Naive thymus-derived CD4-positive, alpha-beta T cell (primary cell): ENCODE measurements at regions of chr6 and their contacts with region 1.

Region 1: DNA sequence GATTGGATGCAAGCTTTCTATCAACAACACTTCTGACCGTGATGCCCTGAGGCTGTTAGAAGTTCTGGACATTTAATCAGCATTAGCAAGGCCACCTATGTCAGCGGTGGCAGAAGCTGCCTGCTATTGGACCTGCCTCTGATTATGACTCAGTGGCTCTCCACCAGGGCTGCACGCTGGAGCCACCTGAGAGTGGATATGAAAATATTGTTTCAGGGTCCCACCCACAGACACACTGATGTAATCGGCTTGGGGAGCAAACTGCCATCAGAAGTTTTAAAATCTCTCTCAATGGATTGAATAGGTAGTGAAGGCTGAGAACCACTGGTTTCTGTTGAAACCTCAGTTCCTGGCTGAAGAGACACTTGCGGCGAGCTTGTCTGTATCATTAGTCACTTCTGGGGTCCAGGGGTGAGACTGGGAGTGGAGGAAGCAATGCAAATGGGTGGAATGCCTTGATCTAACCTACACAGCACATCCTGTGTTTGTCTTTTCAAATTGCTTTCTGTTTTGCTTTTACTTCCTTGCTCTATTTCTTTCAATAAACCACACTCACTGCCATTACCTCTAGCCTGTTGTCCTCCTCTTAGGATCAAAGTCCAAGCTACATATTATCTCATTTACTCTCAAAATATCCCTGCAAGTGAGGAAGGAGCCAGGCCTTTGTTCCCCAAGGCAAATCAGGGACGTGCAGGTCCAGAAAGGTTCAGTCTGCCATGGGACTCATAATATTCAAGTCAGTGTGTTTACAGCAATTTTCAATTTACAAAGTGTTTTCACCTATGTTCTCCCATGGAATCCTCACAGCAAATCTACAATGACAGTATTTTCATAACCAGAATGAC is 4.2 kb downstream of the CLIC5 start:
- DNase-seq: peak in 8 of 9 donors; percentile 35 to 69 (median 58)
- ATAC-seq: peak; percentile 88
- H3K4me3 ChIP-seq: peak overlapping the region; percentile 45
- H3K4me3 Mint-ChIP-seq: peak overlapping the region; percentile 68 to 82 (median 78)
- H3K27ac ChIP-seq: peak overlapping the region; percentile 64
- H3K27ac Mint-ChIP-seq: peak overlapping the region; percentile 85 to 98 (median 92)
- H3K4me1 ChIP-seq: peaks cover 37 to 43% of the 10 kb centered on the region in 2 donors
- H3K4me1 Mint-ChIP-seq: peaks cover 37 to 62% (median 60%) of the 10 kb centered on the region in 7 donors
- H3K27me3 ChIP-seq: no peaks in the 10 kb centered on the region
- H3K27me3 Mint-ChIP-seq: peaks cover 0 to 14% (median 1%) of the 10 kb centered on the region in 5 donors

Region 2: GRCh38 chr6:44820321-44820720 is 1191.1 kb before region 1 on chr6:
- CTCF ChIA-PET with region 1: no interaction called
- POLR2A ChIA-PET with region 1: no interaction called
- intact Hi-C with region 1: no loop called
- DNase-seq: no peak
- ATAC-seq: peak; percentile 76
- H3K4me3 ChIP-seq: no peak overlapping the region
- H3K4me3 Mint-ChIP-seq: no peak overlapping the region
- H3K27ac ChIP-seq: no peak overlapping the region
- H3K27ac Mint-ChIP-seq: peak overlapping the region in 2 of 9 donors; percentile 1 to 4
- H3K4me1 ChIP-seq: no peaks in the 10 kb centered on the region
- H3K4me1 Mint-ChIP-seq: peaks cover 0 to 4% (median 2%) of the 10 kb centered on the region in 7 donors
- H3K27me3 ChIP-seq: no peaks in the 10 kb centered on the region
- H3K27me3 Mint-ChIP-seq: no peaks in the 10 kb centered on the region

Region 3: DNA sequence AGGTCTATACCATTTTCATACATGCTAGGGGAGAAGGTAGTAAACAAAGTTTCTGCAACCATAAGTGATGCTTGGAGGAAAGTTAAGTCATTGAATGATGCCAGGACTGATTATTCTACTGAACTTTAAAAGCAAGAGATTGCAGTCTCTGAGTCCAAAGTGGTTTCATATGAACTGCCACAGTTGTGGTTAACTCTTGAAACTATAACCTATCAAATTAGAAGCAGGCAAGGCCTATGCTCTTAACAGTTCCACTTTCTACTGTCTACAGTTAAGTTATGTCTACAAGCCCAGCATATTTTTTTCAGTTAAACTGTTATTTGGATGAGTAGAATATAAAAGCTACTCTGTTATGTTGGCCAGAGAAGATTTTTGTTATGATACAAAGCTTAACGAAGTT is 1009.8 kb before region 1 on chr6:
- CTCF ChIA-PET with region 1: no interaction called
- POLR2A ChIA-PET with region 1: no interaction called
- intact Hi-C with region 1: loop called in 1 of 2 experiments (anchors 10 kb)
- DNase-seq: peak in 3 of 9 donors; percentile 19 to 22 (median 21)
- ATAC-seq: peak; percentile 74
- H3K4me3 ChIP-seq: no peak overlapping the region
- H3K4me3 Mint-ChIP-seq: peak overlapping the region in 5 of 10 donors; percentile 8 to 49 (median 13)
- H3K27ac ChIP-seq: peak overlapping the region; percentile 2
- H3K27ac Mint-ChIP-seq: peak overlapping the region in 7 of 9 donors; percentile 14 to 87 (median 59)
- H3K4me1 ChIP-seq: peaks cover 4 to 7% of the 10 kb centered on the region in 2 donors
- H3K4me1 Mint-ChIP-seq: peaks cover 7 to 36% (median 26%) of the 10 kb centered on the region in 7 donors
- H3K27me3 ChIP-seq: no peaks in the 10 kb centered on the region
- H3K27me3 Mint-ChIP-seq: no peaks in the 10 kb centered on the region

Region 4: DNA sequence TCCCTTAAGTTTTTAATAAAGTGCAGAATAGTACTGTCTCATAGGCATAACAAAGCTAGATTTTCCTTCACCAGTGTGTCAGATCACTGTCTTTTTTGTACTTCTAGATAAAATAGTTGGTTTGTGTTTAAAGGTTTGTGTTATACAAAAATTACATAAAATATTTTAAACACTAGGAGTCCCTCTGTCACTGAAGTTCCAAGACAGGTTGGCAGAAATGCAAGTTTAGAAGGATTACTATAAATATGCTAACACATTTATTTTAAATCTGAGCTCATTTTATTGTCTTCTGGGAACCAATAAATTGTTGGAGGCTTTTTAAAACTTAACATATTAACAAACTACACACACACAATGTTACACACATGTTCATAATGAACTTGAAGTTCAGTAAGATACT is 714.1 kb before region 1 on chr6:
- CTCF ChIA-PET with region 1: no interaction called
- POLR2A ChIA-PET with region 1: no interaction called
- intact Hi-C with region 1: loop called in 1 of 2 experiments (anchors 5 kb)
- DNase-seq: no peak
- ATAC-seq: no peak
- H3K4me3 ChIP-seq: no peak overlapping the region
- H3K4me3 Mint-ChIP-seq: no peak overlapping the region
- H3K27ac ChIP-seq: no peak overlapping the region
- H3K27ac Mint-ChIP-seq: peak overlapping the region in 6 of 9 donors; percentile 4 to 56 (median 19)
- H3K4me1 ChIP-seq: peaks cover 0 to 14% of the 10 kb centered on the region in 2 donors
- H3K4me1 Mint-ChIP-seq: peaks cover 21 to 74% (median 43%) of the 10 kb centered on the region in 7 donors
- H3K27me3 ChIP-seq: no peaks in the 10 kb centered on the region
- H3K27me3 Mint-ChIP-seq: no peaks in the 10 kb centered on the region

Region 5: DNA sequence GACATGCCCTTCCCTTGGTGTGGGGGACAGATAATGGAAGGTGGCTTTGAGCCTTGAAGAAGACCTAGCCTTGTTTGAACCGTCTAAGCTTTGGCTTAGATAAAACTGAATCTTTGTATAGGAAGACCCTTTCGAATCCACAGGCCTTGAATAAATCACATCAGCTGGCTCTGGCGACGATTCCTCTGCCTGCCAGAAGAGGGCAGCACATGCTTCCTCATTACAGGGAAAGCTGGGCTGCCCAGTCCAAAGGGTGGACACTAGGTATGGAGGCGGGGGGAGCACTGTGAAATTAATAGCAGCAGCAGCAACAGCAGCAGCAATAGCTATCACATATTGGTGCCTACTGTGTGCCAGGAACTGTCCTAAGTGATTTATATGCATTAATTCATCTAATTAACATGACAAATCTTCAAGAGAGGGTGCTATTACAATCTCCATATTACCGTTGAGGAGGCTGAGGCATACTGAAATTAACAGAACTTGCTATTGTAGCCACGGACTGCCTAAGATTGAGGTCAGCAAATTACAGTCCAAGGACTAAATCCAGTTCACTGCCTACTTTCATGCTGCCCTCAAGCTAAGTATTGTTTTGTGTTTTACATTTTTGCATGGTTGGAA is 80.9 kb before region 1 on chr6:
- CTCF ChIA-PET with region 1: interaction called, 6 read pairs
- POLR2A ChIA-PET with region 1: no interaction called
- intact Hi-C with region 1: loop called (anchors 1 to 5 kb)
- DNase-seq: peak in 8 of 9 donors; percentile 28 to 55 (median 43)
- ATAC-seq: peak; percentile 71
- H3K4me3 ChIP-seq: no peak overlapping the region
- H3K4me3 Mint-ChIP-seq: no peak overlapping the region
- H3K27ac ChIP-seq: no peak overlapping the region
- H3K27ac Mint-ChIP-seq: no peak overlapping the region
- H3K4me1 ChIP-seq: no peaks in the 10 kb centered on the region
- H3K4me1 Mint-ChIP-seq: peaks cover 0 to 5% (median 0%) of the 10 kb centered on the region in 7 donors
- H3K27me3 ChIP-seq: no peaks in the 10 kb centered on the region
- H3K27me3 Mint-ChIP-seq: peaks cover 0 to 5% (median 0%) of the 10 kb centered on the region in 5 donors

Region 6: GRCh38 chr6:45991189-45991588 is 20.3 kb before region 1 on chr6:
- CTCF ChIA-PET with region 1: no interaction called
- POLR2A ChIA-PET with region 1: interaction called, 3 read pairs
- intact Hi-C with region 1: loop called in 1 of 2 experiments (anchors 1 kb)
- DNase-seq: no peak
- ATAC-seq: no peak
- H3K4me3 ChIP-seq: no peak overlapping the region
- H3K4me3 Mint-ChIP-seq: no peak overlapping the region
- H3K27ac ChIP-seq: no peak overlapping the region
- H3K27ac Mint-ChIP-seq: no peak overlapping the region
- H3K4me1 ChIP-seq: no peaks in the 10 kb centered on the region
- H3K4me1 Mint-ChIP-seq: peaks cover 0 to 7% (median 0%) of the 10 kb centered on the region in 7 donors
- H3K27me3 ChIP-seq: no peaks in the 10 kb centered on the region
- H3K27me3 Mint-ChIP-seq: peaks cover 0 to 2% (median 0%) of the 10 kb centered on the region in 5 donors

Region 7: GRCh38 chr6:46129629-46130511 is 118.4 kb after region 1 on chr6 and contains the start of gene ENPP4:
- CTCF ChIA-PET with region 1: no interaction called
- POLR2A ChIA-PET with region 1: interaction called, 4 read pairs
- intact Hi-C with region 1: loop called (anchors 2 kb)
- DNase-seq: peak; percentile 78 to 98 (median 91)
- ATAC-seq: peak; percentile 100
- H3K4me3 ChIP-seq: peak within 1 kb of the TSS; percentile 98
- H3K4me3 Mint-ChIP-seq: peak within 1 kb of the TSS; percentile 94 to 99 (median 98)
- H3K27ac ChIP-seq: peak within 1 kb of the TSS; percentile 73
- H3K27ac Mint-ChIP-seq: peak within 1 kb of the TSS; percentile 86 to 97 (median 92)
- H3K4me1 ChIP-seq: peaks cover 15 to 18% of the 10 kb centered on the region in 2 donors
- H3K4me1 Mint-ChIP-seq: peaks cover 19 to 59% (median 46%) of the 10 kb centered on the region in 7 donors
- H3K27me3 ChIP-seq: no peaks in the 10 kb centered on the region
- H3K27me3 Mint-ChIP-seq: peaks cover 0 to 4% (median 0%) of the 10 kb centered on the region in 5 donors
- total RNA-seq, gene ENPP4: 3.8 to 9.8 (median 8.2) TPM

Region 8: GRCh38 chr6:46170357-46171289 is 159.2 kb after region 1 on chr6 and contains the start of gene ENPP5:
- CTCF ChIA-PET with region 1: no interaction called
- POLR2A ChIA-PET with region 1: no interaction called
- intact Hi-C with region 1: loop called in 1 of 2 experiments (anchors 1 kb)
- DNase-seq: peak; percentile 31 to 69 (median 56)
- ATAC-seq: peak; percentile 92
- H3K4me3 ChIP-seq: peak within 1 kb of the TSS; percentile 79
- H3K4me3 Mint-ChIP-seq: peak within 1 kb of the TSS; percentile 68 to 88 (median 84)
- H3K27ac ChIP-seq: no peak within 1 kb of the TSS
- H3K27ac Mint-ChIP-seq: peak within 1 kb of the TSS in 1 of 9 donors; percentile 3
- H3K4me1 ChIP-seq: peaks cover 0 to 20% of the 10 kb centered on the region in 2 donors
- H3K4me1 Mint-ChIP-seq: peaks cover 6 to 19% (median 13%) of the 10 kb centered on the region in 7 donors
- H3K27me3 ChIP-seq: no peaks in the 10 kb centered on the region
- H3K27me3 Mint-ChIP-seq: peaks cover 15 to 74% (median 29%) of the 10 kb centered on the region in 5 donors
- total RNA-seq, gene ENPP5: 0.59 to 1.4 (median 0.92) TPM in 3 of 5 experiments, not detected in the others